MCF 10A (cell line): ENCODE measurements at regions of chr4 and their contacts with region 1.

Region 1: GRCh38 chr4:17447675-17448298 is 64.1 kb downstream of the QDPR start:
- DNase-seq: peak; percentile 84
- H3K4me3 Mint-ChIP-seq: no peak overlapping the region
- H3K27ac Mint-ChIP-seq: no peak overlapping the region
- H3K4me1 Mint-ChIP-seq: peaks cover 17% of the 10 kb centered on the region
- H3K27me3 Mint-ChIP-seq: no peaks in the 10 kb centered on the region
- CTCF ChIP-seq: peak; percentile 70

Region 2: GRCh38 chr4:16642895-16643294 is 804.9 kb before region 1 on chr4:
- CTCF ChIA-PET with region 1: interaction called, 27 read pairs
- POLR2A ChIA-PET with region 1: no interaction called
- intact Hi-C with region 1: loop called (anchors 1 kb)
- DNase-seq: peak; percentile 32
- H3K4me3 Mint-ChIP-seq: no peak overlapping the region
- H3K27ac Mint-ChIP-seq: no peak overlapping the region
- H3K4me1 Mint-ChIP-seq: peaks cover 7% of the 10 kb centered on the region
- H3K27me3 Mint-ChIP-seq: peaks cover 73% of the 10 kb centered on the region
- CTCF ChIP-seq: peak; percentile 22

Region 3: GRCh38 chr4:17324386-17324830 is 123.4 kb before region 1 on chr4:
- CTCF ChIA-PET with region 1: interaction called, 12 read pairs
- POLR2A ChIA-PET with region 1: no interaction called
- intact Hi-C with region 1: no loop called
- DNase-seq: peak; percentile 61
- H3K4me3 Mint-ChIP-seq: no peak overlapping the region
- H3K27ac Mint-ChIP-seq: no peak overlapping the region
- H3K4me1 Mint-ChIP-seq: no peaks in the 10 kb centered on the region
- H3K27me3 Mint-ChIP-seq: no peaks in the 10 kb centered on the region
- CTCF ChIP-seq: peak; percentile 65

Region 4: GRCh38 chr4:17347445-17347844 is 100.3 kb before region 1 on chr4:
- CTCF ChIA-PET with region 1: interaction called, 110 read pairs
- POLR2A ChIA-PET with region 1: interaction called, 15 read pairs
- intact Hi-C with region 1: loop called (anchors 1 kb)
- DNase-seq: peak; percentile 70
- H3K4me3 Mint-ChIP-seq: no peak overlapping the region
- H3K27ac Mint-ChIP-seq: no peak overlapping the region
- H3K4me1 Mint-ChIP-seq: no peaks in the 10 kb centered on the region
- H3K27me3 Mint-ChIP-seq: no peaks in the 10 kb centered on the region
- CTCF ChIP-seq: peak; percentile 58

Region 5: DNA sequence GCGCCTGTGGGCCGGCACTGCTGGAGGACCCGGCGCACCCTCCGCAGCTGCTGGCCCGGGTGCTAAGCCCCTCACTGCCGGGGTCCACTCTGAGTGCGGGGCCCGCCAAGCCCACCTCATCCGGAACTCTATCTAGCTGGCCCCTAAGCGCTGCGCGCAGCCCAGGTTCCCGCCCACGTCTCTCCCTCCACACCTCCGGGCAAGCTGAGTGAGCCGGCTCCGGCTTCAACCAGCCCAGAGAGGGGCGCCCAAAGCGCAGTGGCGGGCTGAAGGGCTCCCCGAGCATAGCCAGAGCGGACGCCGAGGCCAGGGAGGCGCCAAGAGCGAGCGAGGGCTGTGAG is 11.1 kb before region 1 on chr4:
- CTCF ChIA-PET with region 1: interaction called, 11 read pairs
- POLR2A ChIA-PET with region 1: interaction called, 5 read pairs
- intact Hi-C with region 1: no loop called
- DNase-seq: no peak
- H3K4me3 Mint-ChIP-seq: no peak overlapping the region
- H3K27ac Mint-ChIP-seq: no peak overlapping the region
- H3K4me1 Mint-ChIP-seq: no peaks in the 10 kb centered on the region
- H3K27me3 Mint-ChIP-seq: no peaks in the 10 kb centered on the region
- CTCF ChIP-seq: no peak